ENCODE measurements at regions of chr2 and their contacts with region 1.

Region 1: DNA sequence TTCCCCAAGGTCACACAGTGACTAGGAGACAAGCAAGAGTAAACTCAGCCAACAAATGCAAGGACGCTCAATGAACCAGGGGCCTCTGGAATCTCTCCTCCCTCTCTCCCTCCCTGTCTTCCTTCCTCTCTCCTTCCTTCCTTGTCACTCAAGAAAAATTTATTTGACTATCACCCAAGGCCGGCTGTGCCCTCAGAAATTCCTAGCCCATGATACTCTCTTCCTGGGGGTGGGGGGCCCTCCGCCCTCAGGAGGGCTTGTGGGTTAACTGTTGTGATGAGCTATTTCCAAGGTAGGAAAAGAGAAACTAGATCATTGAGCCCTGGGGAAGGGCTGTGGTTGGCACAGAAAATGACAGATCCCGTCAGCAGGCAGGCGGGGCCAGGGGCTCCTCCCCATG is 21.7 kb downstream of the INHBB start:
- DNase-seq: no peak
- H3K4me3 ChIP-seq: no peak overlapping the region
- H3K27ac ChIP-seq: no peak overlapping the region
- H3K4me1 ChIP-seq: no peaks in the 10 kb centered on the region
- H3K27me3 ChIP-seq: no peaks in the 10 kb centered on the region
- CTCF ChIP-seq: no peak

Region 2: DNA sequence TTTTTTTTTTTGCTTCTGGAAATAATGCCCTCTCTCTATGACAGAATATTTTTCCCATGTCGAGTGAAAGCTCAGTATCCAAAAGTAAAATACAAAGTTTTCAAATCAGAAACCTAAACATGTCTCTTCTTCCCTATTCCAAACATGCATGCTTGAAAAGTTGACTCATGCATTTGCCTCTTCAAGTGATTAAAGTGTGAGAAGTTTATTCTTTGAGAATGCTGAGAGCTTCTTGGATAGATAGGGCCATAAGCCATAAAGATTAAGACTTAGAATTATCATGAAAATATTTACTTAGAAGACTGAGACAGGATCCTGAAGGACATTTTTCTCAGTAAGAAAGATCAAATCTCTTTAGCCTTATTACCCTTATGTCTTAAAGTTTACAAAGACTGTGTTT is 453.4 kb before region 1 on chr2:
- intact Hi-C with region 1: loop called (anchors 5 kb)
- DNase-seq: no peak
- H3K4me3 ChIP-seq: no peak overlapping the region
- H3K27ac ChIP-seq: no peak overlapping the region
- H3K4me1 ChIP-seq: no peaks in the 10 kb centered on the region
- H3K27me3 ChIP-seq: no peaks in the 10 kb centered on the region
- CTCF ChIP-seq: no peak

Region 3: GRCh38 chr2:120134263-120134662 is 233.4 kb before region 1 on chr2:
- intact Hi-C with region 1: no loop called
- DNase-seq: no peak
- H3K4me3 ChIP-seq: no peak overlapping the region
- H3K27ac ChIP-seq: no peak overlapping the region
- H3K4me1 ChIP-seq: no peaks in the 10 kb centered on the region
- H3K27me3 ChIP-seq: no peaks in the 10 kb centered on the region
- CTCF ChIP-seq: no peak

Region 4: GRCh38 chr2:120272763-120273481 is 94.7 kb before region 1 on chr2:
- intact Hi-C with region 1: no loop called
- DNase-seq: no peak
- H3K4me3 ChIP-seq: no peak overlapping the region
- H3K27ac ChIP-seq: no peak overlapping the region
- H3K4me1 ChIP-seq: no peaks in the 10 kb centered on the region
- H3K27me3 ChIP-seq: no peaks in the 10 kb centered on the region
- CTCF ChIP-seq: no peak